Mammary epithelial cell (primary cell): ENCODE measurements at regions of chr2 and their contacts with region 1.

Region 1: GRCh38 chr2:219689676-219690628 is 62.5 kb downstream of the SLC4A3 start:
- DNase-seq: peak; percentile 56
- H3K4me3 ChIP-seq: peak overlapping the region in 1 of 3 experiments; percentile 24
- H3K27ac ChIP-seq: peak overlapping the region; percentile 98
- H3K4me1 ChIP-seq: peaks cover 50% of the 10 kb centered on the region
- H3K27me3 ChIP-seq: no peaks in the 10 kb centered on the region
- CTCF ChIP-seq: peak; percentile 66 to 70

Region 2: DNA sequence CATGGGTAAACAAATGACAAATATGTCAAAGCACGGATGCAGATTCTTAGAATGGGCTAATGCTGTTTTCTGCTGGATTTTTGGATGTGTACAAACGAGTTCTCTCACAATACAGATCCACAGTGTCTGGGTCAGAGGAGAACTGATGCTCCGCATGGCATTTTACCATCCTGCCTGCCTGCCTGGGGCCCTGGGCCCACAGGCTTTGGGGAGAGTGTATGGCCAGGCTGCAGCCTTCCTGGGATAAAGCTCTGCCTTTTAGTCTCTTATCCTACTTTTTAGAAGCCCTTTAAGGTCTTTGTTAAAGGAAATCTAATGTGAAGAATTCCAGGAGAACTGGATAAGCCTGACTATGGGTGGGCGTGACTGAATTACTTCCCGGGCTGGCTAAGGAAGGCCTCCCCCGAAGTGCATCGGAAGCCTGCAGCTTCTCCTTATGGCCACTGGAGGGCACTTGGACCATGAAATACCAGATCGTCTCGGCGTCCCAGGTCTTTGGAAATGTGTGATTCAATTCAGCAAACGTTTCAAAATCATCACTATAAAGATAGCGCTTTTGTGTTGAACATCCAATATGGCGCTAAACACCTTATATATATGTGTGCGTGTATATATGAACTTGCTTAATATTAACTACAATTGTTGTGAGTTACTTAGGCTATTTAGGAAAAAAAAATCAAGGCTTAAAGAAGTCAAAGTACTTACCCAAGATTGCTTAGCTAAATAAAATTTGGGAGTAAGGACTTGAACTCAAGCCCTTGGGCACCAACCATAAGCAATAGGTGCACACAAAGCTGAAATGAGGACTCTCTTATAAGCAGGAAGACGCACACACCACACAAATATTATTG is 287.1 kb before region 1 on chr2:
- CTCF ChIA-PET with region 1: no interaction called
- dilution Hi-C with region 1: loop called (anchors 25 kb)
- in situ Hi-C with region 1: no loop called
- intact Hi-C with region 1: loop called (anchors 1 kb)
- DNase-seq: peak; percentile 58
- H3K4me3 ChIP-seq: no peak overlapping the region
- H3K27ac ChIP-seq: no peak overlapping the region
- H3K4me1 ChIP-seq: no peaks in the 10 kb centered on the region
- H3K27me3 ChIP-seq: no peaks in the 10 kb centered on the region
- CTCF ChIP-seq: peak; percentile 93 to 99

Region 3: GRCh38 chr2:219466816-219467748 is 222.9 kb before region 1 on chr2:
- CTCF ChIA-PET with region 1: no interaction called
- dilution Hi-C with region 1: no loop called
- in situ Hi-C with region 1: no loop called
- intact Hi-C with region 1: loop called (anchors 1 kb)
- DNase-seq: peak; percentile 87
- H3K4me3 ChIP-seq: no peak overlapping the region
- H3K27ac ChIP-seq: peak overlapping the region; percentile 60
- H3K4me1 ChIP-seq: peaks cover 41% of the 10 kb centered on the region
- H3K27me3 ChIP-seq: no peaks in the 10 kb centered on the region
- CTCF ChIP-seq: no peak

Region 4: DNA sequence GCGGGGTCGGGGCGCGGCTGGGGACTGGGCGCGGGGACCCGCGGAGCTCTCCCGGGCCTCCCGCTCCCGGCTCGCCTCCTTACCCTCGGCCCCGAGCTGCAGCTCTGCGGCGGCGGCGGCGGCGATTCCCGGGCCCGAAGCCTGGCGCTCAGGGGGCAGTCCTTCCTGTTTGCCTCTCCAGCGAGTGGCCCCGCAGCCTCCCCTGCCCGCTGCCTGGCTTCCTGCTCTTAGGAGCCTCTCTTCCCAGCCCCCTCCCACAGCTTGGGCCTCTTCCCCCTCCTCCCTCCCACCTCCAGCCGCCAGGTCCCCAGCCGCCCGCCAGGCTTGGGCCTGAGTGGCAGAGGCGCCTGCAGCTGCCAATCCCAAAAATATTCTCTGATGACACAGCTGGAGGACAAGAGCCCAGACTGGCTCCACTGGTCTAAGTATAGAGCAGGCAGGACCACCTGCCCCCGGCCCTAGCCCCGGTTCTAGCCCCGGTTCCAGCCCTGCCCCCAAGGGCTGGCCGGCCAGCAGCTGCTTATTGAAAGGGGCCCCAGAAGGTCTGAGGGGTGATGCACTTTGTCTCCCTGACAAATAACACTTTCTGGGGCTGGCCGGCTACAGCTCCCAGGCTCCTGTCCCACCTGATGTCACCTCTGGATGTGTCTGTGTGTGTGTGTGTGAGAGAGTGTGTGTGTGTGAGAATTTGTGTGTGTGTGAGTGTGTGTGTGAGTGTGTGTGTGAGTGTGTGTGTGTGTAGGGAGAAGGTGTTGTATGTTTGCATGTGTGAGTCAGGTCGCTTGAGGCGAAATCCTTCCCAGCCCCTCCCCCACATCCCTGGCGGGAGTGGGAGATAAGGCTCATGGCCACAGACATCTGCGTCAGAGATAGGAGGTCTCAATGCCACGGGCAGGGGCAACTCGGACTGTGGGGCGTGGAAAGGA is 118.4 kb before region 1 on chr2 and contains the start of gene OBSL1:
- CTCF ChIA-PET with region 1: no interaction called
- dilution Hi-C with region 1: no loop called
- in situ Hi-C with region 1: no loop called
- intact Hi-C with region 1: loop called (anchors 10 kb)
- DNase-seq: peak; percentile 65
- H3K4me3 ChIP-seq: peak within 1 kb of the TSS; percentile 43 to 79 (median 76)
- H3K27ac ChIP-seq: no peak within 1 kb of the TSS
- H3K4me1 ChIP-seq: peaks cover 16% of the 10 kb centered on the region
- H3K27me3 ChIP-seq: no peaks in the 10 kb centered on the region
- CTCF ChIP-seq: no peak
- total RNA-seq, gene OBSL1: 32.6 to 52.8 TPM

Region 5: GRCh38 chr2:219661197-219661954 is 28.6 kb before region 1 on chr2:
- CTCF ChIA-PET with region 1: interaction called, 4 read pairs
- dilution Hi-C with region 1: no loop called
- in situ Hi-C with region 1: no loop called
- intact Hi-C with region 1: loop called (anchors 1 kb)
- DNase-seq: peak; percentile 89
- H3K4me3 ChIP-seq: peak overlapping the region in 1 of 3 experiments; percentile 5
- H3K27ac ChIP-seq: peak overlapping the region; percentile 83
- H3K4me1 ChIP-seq: peaks cover 56% of the 10 kb centered on the region
- H3K27me3 ChIP-seq: no peaks in the 10 kb centered on the region
- CTCF ChIP-seq: no peak